ENCODE measurements at regions of chr15 and their contacts with region 1.

Region 1: GRCh38 chr15:41774062-41774881 is at the start of gene MAPKBP1:
- DNase-seq: peak; percentile 99
- H3K4me3 ChIP-seq: peak within 1 kb of the TSS; percentile 71
- H3K27ac ChIP-seq: peak within 1 kb of the TSS; percentile 93
- H3K4me1 ChIP-seq: peaks cover 11% of the 10 kb centered on the region
- H3K27me3 ChIP-seq: no peaks in the 10 kb centered on the region
- CTCF ChIP-seq: peak; percentile 49
- total RNA-seq, gene MAPKBP1: 9.0 to 14.6 TPM

Region 2: GRCh38 chr15:41660235-41661077 is 113.8 kb before region 1 on chr15 and contains the start of gene MGA:
- intact Hi-C with region 1: no loop called
- DNase-seq: peak; percentile 90
- H3K4me3 ChIP-seq: peak within 1 kb of the TSS; percentile 50
- H3K27ac ChIP-seq: peak within 1 kb of the TSS; percentile 79
- H3K4me1 ChIP-seq: no peaks in the 10 kb centered on the region
- H3K27me3 ChIP-seq: no peaks in the 10 kb centered on the region
- CTCF ChIP-seq: no peak
- total RNA-seq, gene MGA: 21.8 to 25.8 TPM

Region 3: GRCh38 chr15:41691471-41691870 is 82.8 kb before region 1 on chr15:
- intact Hi-C with region 1: no loop called
- DNase-seq: no peak
- H3K4me3 ChIP-seq: no peak overlapping the region
- H3K27ac ChIP-seq: no peak overlapping the region
- H3K4me1 ChIP-seq: no peaks in the 10 kb centered on the region
- H3K27me3 ChIP-seq: no peaks in the 10 kb centered on the region
- CTCF ChIP-seq: no peak

Region 4: GRCh38 chr15:41811432-41812195 is 37.3 kb after region 1 on chr15:
- intact Hi-C with region 1: loop called (anchors 5 kb)
- DNase-seq: peak; percentile 87
- H3K4me3 ChIP-seq: no peak overlapping the region
- H3K27ac ChIP-seq: no peak overlapping the region
- H3K4me1 ChIP-seq: no peaks in the 10 kb centered on the region
- H3K27me3 ChIP-seq: no peaks in the 10 kb centered on the region
- CTCF ChIP-seq: peak; percentile 80

Region 5: DNA sequence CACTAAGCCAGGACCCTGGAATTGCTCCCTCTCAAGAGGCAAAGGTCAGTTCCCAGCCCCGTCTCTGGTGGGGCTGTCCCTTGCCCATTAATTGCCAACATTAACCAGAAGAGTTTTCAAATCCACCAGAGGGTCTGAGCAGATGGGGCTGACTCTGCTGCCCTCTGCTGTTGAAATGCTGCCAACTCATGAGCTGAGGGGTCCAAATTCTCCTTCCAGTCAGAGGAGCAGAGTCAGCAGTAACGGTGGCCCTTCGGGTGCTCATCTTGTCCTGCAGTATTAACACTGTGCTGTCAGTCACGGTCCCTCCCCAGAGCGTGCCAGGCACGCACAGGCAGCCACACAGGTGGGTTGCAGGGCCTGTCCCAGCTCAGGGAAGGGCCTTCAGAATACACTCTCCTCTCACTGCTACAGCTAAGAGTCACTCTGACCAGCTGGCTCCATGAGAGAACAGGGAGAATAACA is 130.3 kb after region 1 on chr15:
- intact Hi-C with region 1: loop called (anchors 5 kb)
- DNase-seq: peak; percentile 57
- H3K4me3 ChIP-seq: no peak overlapping the region
- H3K27ac ChIP-seq: no peak overlapping the region
- H3K4me1 ChIP-seq: no peaks in the 10 kb centered on the region
- H3K27me3 ChIP-seq: no peaks in the 10 kb centered on the region
- CTCF ChIP-seq: peak; percentile 87

Measured in colonic mucosa (tissue), 4 donors.